ENCODE measurements at regions of chr19 and their contacts with region 1.

Region 1: DNA sequence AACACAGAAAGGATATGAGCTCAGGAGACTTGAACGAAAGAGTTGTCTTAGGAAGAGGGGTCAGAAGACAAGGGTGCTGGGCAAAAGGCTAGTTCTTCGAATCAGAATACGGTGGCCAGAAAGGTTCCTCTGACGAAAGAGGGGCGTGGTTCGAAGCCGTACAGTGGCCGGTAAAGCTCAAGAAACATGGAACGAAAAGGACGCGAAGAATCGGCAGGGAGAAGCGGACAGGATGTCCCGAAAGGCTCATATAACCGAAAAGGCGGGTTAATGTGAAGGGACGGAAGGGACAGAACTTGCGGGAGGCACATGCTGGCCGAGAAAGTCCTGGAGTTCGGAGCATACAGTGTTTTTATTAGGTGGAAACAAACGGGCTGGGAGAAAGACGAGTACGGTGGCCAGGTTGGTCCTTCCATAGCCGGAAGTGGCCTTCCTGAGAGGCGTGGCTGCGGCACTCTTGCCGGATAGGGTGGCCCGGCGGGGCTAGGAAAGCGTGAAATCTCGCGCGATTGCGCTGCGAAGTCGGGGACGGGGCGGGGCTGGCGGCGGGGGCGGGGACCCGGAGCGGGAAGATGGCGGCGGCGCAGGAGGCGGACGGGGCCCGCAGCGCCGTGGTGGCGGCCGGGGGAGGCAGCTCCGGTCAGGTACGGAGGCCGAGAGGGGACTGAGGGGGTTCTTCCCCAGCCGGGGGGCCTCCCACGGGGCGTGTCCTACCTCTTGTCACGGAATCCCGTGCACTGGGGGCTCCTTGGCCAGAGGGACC is at the start of gene CLPTM1:
- DNase-seq: peak; percentile 99 to 100
- ATAC-seq: peak; percentile 91 to 95
- H3K4me3 ChIP-seq: peak within 1 kb of the TSS; percentile 98
- H3K27ac ChIP-seq: peak within 1 kb of the TSS; percentile 90 to 91
- H3K4me1 ChIP-seq: peaks cover 23% of the 10 kb centered on the region
- CTCF ChIP-seq: no peak
- EP300 ChIP-seq: no peak
- POLR2A ChIP-seq: peak; percentile 76
- RAD21 ChIP-seq: no peak
- polyA plus RNA-seq, gene CLPTM1: 96.5 and 99.3 TPM in 2 replicates

Region 2: DNA sequence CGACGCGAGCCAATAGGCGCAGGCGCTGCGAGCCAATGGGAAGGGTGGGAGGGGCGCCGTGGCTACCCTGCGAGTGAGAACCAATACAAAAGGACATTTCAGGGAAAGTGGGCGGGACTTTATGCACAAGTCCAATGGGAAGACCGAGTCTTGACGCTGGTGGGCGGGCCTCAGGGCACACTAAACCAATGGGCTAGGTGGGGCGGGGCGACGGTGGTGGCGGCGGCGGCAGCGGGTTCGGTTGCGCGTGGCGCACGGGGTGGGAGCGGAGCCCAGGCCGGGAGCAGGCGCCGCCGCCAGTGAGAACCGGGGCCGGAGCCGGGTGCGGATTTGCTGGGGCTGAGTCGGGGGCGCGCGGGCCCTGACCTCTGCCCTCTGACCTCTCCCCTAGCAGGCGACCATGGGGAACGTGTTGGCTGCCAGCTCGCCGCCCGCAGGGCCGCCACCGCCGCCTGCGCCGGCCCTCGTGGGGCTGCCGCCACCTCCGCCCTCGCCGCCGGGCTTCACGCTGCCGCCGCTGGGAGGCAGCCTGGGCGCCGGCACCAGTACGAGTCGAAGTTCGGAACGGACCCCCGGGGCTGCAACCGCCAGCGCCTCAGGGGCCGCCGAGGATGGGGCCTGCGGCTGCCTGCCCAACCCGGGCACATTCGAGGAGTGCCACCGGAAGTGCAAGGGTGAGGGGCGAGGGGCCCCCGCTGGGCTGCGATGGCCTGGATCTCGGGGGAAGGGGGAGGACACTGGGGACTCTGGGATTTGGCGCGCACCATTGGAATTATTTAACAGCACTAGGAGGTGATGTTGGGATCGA is 63.8 kb before region 1 on chr19 and contains the start of gene TOMM40:
- CTCF ChIA-PET with region 1: interaction called, 22 read pairs
- POLR2A ChIA-PET with region 1: interaction called, 8 read pairs
- DNase-seq: peak; percentile 99 to 100
- ATAC-seq: peak in 1 of 2 experiments; percentile 84; a peak in 3 of 6 replicates
- H3K4me3 ChIP-seq: peak within 1 kb of the TSS; percentile 93
- H3K27ac ChIP-seq: peak within 1 kb of the TSS; percentile 93 to 96
- H3K4me1 ChIP-seq: peaks cover 23% of the 10 kb centered on the region
- CTCF ChIP-seq: no peak
- EP300 ChIP-seq: no peak
- POLR2A ChIP-seq: peak; percentile 65
- RAD21 ChIP-seq: no peak
- polyA plus RNA-seq, gene TOMM40: 83.6 and 92.7 TPM in 2 replicates

Region 3: DNA sequence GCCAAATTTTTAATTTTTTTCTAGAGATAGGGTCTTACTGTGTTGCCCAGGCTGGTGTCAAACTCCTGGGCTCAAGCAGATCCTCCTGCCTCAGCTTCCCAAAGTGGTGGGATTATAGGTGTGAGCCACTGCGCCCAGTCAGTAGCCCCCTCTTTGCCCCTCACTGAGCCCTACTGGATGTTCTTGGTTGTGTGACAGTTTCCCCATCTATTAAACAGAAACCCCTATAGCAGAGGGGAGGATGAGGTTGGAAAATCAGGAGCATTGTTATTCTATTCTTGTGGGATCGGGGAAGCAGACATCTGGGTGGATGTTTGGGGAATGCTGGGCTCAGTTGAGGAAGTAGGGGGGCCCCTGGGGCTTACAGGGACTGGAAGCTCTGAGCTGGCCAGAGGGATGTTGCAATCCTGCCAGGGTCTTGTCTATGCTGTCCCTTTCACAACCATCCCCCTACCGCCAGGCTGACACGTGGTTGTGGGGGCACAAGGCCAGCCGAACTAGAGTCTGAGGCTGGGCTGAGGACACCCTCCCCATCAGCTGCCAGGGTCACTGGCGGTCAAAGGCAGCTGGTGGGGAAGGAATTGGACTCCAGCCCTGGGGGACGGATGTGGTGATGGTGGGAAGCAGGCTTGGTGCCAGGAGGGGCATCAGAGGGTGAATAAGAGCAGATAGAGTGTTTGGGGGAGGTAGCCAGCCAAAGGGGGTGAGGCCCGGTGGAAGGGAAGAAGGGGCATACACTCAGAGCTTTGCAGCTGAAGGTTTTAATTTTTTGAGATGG is 29.7 kb before region 1 on chr19:
- CTCF ChIA-PET with region 1: interaction called, 22 read pairs
- POLR2A ChIA-PET with region 1: no interaction called
- DNase-seq: no peak
- ATAC-seq: no peak
- H3K4me3 ChIP-seq: no peak overlapping the region
- H3K27ac ChIP-seq: no peak overlapping the region
- H3K4me1 ChIP-seq: peaks cover 15% of the 10 kb centered on the region; the same call in 2 of the 3 replicates
- CTCF ChIP-seq: no peak
- EP300 ChIP-seq: no peak
- POLR2A ChIP-seq: no peak
- RAD21 ChIP-seq: no peak

Region 4: DNA sequence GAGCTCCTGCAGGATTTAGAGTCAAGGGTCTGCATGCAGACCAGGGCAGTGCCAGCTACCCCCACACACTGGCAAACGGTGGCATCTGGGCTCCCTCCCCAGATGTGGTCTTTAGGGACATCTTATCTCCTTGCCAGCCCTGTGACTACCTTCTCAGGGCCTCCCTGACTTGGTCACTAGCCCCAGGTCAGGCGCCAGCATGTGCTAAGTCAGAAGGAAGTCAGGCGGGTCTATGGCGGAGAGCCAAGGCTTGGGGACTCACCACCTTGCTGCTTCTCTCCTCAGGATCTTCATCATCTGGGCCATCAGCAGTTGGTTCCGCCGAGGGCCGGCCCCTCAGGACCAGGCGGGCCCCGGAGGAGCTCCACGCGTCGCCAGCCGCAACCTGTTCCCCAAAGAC is 17.8 kb after region 1 on chr19:
- CTCF ChIA-PET with region 1: interaction called, 21 read pairs
- POLR2A ChIA-PET with region 1: interaction called, 4 read pairs
- DNase-seq: no peak
- ATAC-seq: no peak
- H3K4me3 ChIP-seq: no peak overlapping the region
- H3K27ac ChIP-seq: no peak overlapping the region
- H3K4me1 ChIP-seq: no peaks in the 10 kb centered on the region
- CTCF ChIP-seq: no peak
- EP300 ChIP-seq: no peak
- POLR2A ChIP-seq: no peak
- RAD21 ChIP-seq: no peak